Activated T-helper 2 cell treated with anti-CD3 and anti-CD28 coated beads, Interferon-gamma antibody, Interleukin-2, Interleukin-4, amounts not matched to agents 10 μg/mL and 5 μg/mL and 100 μg/mL, durations not matched to agents 14 hours and 24 hours and 36 hours (primary cell): ENCODE measurements at regions of chr7 and their contacts with region 1.

Region 1: GRCh38 chr7:139043823-139044812 is 8.3 kb upstream of the ZC3HAV1L start:
- DNase-seq: peak; percentile 74
- H3K4me3 Mint-ChIP-seq: peak overlapping the region; percentile 62
- H3K27ac Mint-ChIP-seq: peak overlapping the region; percentile 78
- H3K4me1 Mint-ChIP-seq: peaks cover 60% of the 10 kb centered on the region
- H3K27me3 Mint-ChIP-seq: no peaks in the 10 kb centered on the region

Region 2: DNA sequence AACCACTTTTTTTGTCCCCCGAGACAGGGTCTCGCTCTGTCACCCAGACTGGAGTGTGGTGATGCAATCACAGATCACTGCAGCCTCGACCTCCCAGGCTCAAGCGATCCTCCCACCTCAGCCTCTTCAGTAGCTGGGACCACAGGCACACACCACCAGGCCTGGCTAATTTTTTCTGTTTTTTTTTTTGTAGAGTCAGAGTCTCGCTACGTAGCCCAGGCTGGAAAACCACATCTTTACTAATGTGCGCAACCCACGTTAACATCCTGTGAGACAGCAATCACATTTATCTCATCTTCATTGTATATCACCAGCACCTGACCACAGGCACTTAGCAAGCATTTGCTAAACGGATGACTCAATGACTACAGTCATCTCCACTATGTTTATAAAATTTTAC is 168.3 kb before region 1 on chr7:
- intact Hi-C with region 1: loop called (anchors 5 kb)
- DNase-seq: peak; percentile 75
- H3K4me3 Mint-ChIP-seq: no peak overlapping the region
- H3K27ac Mint-ChIP-seq: peak overlapping the region; percentile 52
- H3K4me1 Mint-ChIP-seq: peaks cover 28% of the 10 kb centered on the region
- H3K27me3 Mint-ChIP-seq: peaks cover 2% of the 10 kb centered on the region

Region 3: DNA sequence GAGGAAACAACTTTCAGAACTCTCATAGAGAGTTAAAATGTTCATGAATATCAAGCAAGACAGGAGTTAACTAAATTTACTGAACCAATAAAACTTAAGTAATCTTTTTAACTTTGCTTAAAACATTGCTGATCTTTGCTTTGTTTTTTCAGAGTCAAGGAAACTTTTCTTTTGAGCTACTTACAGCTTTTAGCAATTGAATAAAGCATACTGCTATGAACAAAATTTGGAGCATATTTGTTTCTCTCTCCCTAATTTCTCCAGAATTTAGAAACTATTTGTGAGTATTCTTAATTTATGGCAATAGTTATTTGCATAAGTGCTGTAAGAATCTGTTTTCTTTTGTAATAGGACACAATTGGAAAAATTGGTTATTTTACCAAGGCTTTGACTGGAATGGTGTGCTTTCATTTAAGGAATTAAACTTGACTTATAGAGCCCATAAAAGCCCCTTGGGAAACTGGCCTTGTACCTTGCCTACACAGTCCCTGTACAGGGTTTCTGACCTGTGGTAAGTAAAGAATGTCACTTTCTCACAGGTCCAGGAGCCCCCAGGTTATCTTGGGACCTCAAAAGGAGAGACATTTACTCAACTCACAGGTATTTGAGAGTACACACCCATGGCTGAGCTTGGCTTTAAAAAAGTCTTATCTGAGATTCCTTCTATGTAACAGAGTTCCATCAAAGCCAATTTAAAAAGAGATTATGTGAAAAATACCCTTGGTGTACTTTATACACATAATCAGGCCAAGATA is 39.6 kb before region 1 on chr7:
- intact Hi-C with region 1: no loop called
- DNase-seq: no peak
- H3K4me3 Mint-ChIP-seq: no peak overlapping the region
- H3K27ac Mint-ChIP-seq: no peak overlapping the region
- H3K4me1 Mint-ChIP-seq: peaks cover under 1% of the 10 kb centered on the region
- H3K27me3 Mint-ChIP-seq: peaks cover 6% of the 10 kb centered on the region

Region 4: GRCh38 chr7:139060695-139061237 is 16.6 kb after region 1 on chr7:
- intact Hi-C with region 1: loop called (anchors 1 kb)
- DNase-seq: no peak
- H3K4me3 Mint-ChIP-seq: no peak overlapping the region
- H3K27ac Mint-ChIP-seq: peak overlapping the region; percentile 58
- H3K4me1 Mint-ChIP-seq: peaks cover 59% of the 10 kb centered on the region
- H3K27me3 Mint-ChIP-seq: no peaks in the 10 kb centered on the region

Region 5: DNA sequence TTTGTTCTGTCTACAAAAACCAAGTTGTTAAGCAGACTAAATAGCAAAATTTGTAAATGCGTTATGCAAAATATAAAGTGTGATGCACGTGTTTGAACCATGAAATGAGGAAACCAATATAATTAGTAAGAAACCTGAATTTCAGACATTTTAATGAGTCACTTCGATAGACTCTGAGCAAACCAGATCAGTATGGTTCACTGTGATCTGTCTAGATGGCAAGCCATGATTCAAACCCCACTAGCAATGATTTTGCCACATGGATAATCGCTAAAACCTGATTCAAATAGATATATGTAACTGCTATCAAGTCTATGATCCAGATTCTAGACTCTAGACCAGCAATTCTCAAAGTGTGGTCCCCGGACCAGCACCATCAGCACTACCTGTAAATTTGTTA is 40.6 kb after region 1 on chr7:
- intact Hi-C with region 1: loop called (anchors 2 kb)
- DNase-seq: no peak
- H3K4me3 Mint-ChIP-seq: no peak overlapping the region
- H3K27ac Mint-ChIP-seq: peak overlapping the region; percentile 83
- H3K4me1 Mint-ChIP-seq: peaks cover 73% of the 10 kb centered on the region
- H3K27me3 Mint-ChIP-seq: no peaks in the 10 kb centered on the region

Region 6: GRCh38 chr7:139104091-139104450 is 60.0 kb after region 1 on chr7:
- intact Hi-C with region 1: loop called (anchors 2 kb)
- DNase-seq: peak; percentile 40
- H3K4me3 Mint-ChIP-seq: peak overlapping the region; percentile 95
- H3K27ac Mint-ChIP-seq: peak overlapping the region; percentile 89
- H3K4me1 Mint-ChIP-seq: peaks cover 38% of the 10 kb centered on the region
- H3K27me3 Mint-ChIP-seq: no peaks in the 10 kb centered on the region

Region 7: GRCh38 chr7:139230774-139231512 is 186.8 kb after region 1 on chr7 and contains the start of gene UBN2:
- intact Hi-C with region 1: loop called (anchors 5 kb)
- DNase-seq: peak; percentile 87
- H3K4me3 Mint-ChIP-seq: peak within 1 kb of the TSS; percentile 100
- H3K27ac Mint-ChIP-seq: peak within 1 kb of the TSS; percentile 83
- H3K4me1 Mint-ChIP-seq: peaks cover 21% of the 10 kb centered on the region
- H3K27me3 Mint-ChIP-seq: peaks cover 17% of the 10 kb centered on the region
- total RNA-seq, gene UBN2: 13.6 and 14.1 TPM in 2 replicates